Activated CD4-positive, alpha-beta T cell treated with anti-CD3 and anti-CD28 coated beads, Interleukin-2, amount 10 ng/mL, durations not matched to agents 24 days and 14 days (primary cell): ENCODE measurements at regions of chr19 and their contacts with region 1.

Region 1: GRCh38 chr19:7562646-7563393 is 27.3 kb downstream of the PNPLA6 start:
- DNase-seq: peak; percentile 70
- H3K4me3 Mint-ChIP-seq: no peak overlapping the region
- H3K27ac Mint-ChIP-seq: no peak overlapping the region
- H3K4me1 Mint-ChIP-seq: no peaks in the 10 kb centered on the region
- H3K27me3 Mint-ChIP-seq: no peaks in the 10 kb centered on the region

Region 2: GRCh38 chr19:7366701-7367420 is 196.0 kb before region 1 on chr19:
- intact Hi-C with region 1: loop called (anchors 5 kb)
- DNase-seq: peak; percentile 81
- H3K4me3 Mint-ChIP-seq: no peak overlapping the region
- H3K27ac Mint-ChIP-seq: peak overlapping the region; percentile 60
- H3K4me1 Mint-ChIP-seq: peaks cover 2% of the 10 kb centered on the region
- H3K27me3 Mint-ChIP-seq: no peaks in the 10 kb centered on the region

Region 3: GRCh38 chr19:7692417-7693088 is 129.7 kb after region 1 on chr19:
- intact Hi-C with region 1: no loop called
- DNase-seq: no peak
- H3K4me3 Mint-ChIP-seq: no peak overlapping the region
- H3K27ac Mint-ChIP-seq: no peak overlapping the region
- H3K4me1 Mint-ChIP-seq: no peaks in the 10 kb centered on the region
- H3K27me3 Mint-ChIP-seq: peaks cover 4% of the 10 kb centered on the region